GM18951 (cell line): ENCODE measurements at regions of chr10 and their contacts with region 1.

Region 1: DNA sequence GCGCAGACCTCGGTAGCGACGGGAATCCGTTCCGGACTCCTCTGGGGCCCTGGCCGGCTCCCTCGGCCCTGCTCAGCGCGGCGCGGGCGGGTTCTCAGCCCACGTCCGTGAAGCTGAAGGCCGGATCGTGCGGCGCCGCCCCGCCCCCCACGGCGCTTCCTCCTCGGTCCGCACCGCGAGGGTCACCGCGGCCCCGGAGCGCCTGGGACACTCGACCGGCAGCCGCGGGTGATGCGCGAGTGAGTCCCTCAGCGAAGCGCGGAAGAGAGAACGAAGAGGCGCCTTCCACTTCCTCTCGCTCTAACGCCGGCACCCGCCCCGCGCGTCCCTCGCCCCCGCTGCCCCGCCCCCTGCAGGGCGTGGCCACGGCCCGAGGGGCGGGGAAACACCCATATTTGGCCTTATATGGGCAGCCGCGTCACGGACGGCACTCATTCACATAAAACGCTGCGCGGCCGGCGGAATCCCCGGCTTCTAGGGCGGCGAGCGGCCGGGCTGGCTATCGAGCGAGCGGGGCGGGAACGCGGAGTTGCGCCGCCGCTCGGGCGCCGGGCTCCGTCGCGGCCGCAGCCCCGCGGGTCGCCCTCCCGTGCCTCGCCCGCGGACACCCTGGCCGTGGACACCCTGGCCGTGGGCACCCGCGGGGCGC is at the start of gene DUSP5:
- POLR2A ChIP-seq: peak; percentile 99

Region 2: DNA sequence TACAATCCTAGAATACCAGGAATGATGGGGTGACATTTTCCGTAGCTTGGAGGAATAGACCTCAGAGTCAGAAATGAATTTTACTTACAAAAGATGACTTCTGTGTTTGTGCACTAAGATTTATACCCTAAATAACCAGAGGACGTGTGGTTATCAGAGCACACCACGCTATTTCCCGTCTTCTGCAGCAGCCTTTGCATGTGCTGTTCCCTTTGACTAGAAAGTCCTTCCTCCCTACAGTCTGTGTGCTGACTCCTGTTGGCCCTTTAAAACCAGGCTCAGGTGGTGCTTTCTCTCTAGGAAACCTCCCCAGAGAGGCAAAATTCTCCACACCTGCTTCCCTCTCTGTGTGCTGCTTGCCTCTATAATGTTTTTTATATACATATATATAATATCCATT is 119.6 kb before region 1 on chr10:
- in situ Hi-C with region 1: no loop called
- POLR2A ChIP-seq: no peak

Region 3: GRCh38 chr10:110425684-110426293 is 71.8 kb before region 1 on chr10:
- in situ Hi-C with region 1: loop called (anchors 10 kb)
- POLR2A ChIP-seq: no peak